Left cardiac atrium (tissue), 4 donors: ENCODE measurements at regions of chr11 and their contacts with region 1.

Region 1: DNA sequence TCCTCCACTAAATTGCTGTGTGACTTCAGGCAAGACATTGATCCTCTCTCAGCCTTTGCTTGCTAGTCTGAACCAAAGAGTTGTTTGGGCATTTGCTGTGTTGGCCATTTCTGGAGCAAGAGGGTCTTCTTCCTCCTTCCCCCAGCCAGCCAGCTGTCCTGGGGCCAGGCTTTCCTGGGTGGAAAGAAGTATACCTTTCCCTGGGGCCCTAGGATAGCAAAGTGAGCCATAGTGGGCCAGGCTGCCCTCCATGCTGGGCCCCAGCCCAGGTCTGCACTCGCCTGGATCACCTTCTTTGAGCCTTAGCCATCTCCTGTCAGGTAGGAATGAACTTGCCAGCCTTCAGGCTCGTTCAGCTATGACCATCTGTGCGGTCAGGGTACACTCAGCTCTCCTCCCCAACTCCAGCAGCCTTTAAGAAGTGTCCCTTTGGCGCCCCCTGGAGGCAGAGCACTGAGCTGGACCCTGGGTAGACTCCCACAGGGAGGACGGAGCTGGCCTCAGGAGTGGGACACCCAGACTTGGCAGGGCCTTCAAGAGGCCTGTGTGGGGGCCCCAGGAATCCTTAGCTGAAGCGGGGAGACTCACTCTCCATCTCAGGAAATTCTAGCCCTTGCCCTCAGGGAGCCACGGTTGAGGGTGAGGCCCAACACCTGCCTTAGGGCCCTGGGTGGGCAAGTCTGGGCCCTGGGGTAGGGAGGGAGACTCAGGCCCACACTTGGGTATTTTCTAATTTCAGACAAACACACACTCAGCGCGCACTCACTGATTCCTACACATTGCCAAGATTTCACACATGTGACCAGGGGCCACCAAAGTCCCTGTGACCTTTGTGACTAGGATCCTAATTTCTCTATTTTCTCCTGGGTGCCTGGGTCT is 35.6 kb upstream of the TPBGL start:
- DNase-seq: peak; percentile 92
- ATAC-seq: peak; percentile 95 to 96

Region 2: DNA sequence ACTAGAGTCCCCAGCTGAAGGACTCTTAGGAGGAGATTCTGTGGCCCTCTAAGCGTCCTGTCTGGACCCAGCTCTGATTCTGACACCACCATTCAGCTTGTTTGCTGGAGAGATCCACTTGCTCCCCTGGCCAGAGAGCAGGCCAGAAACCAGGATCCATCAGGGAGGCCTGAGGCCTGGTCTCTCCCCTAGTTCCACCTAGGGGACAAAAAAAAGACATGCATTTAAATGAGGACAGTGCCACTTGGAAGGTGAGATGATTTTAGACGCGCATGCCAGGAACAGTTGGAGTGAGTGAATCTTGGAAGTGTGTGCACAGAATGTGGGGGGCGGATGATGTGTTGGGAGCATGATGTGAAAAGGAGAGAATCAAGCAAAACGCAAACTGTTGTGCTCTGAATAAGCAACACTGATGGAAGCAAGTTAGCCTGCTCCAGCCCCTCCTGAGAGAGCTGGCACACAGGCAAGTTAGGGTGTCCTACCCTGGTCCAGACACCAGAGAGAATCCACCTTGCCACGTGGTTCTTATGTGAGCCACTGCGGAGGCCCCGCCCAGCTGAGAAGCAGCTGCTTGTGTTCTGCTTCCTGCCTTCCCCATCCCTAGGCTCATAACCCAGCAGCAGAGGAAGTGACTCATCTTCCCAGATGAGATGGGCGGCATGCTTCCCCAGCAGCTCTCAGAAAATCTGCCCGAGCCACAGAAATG is 62.1 kb before region 1 on chr11:
- intact Hi-C with region 1: loop called (anchors 1 to 2 kb)
- DNase-seq: peak; percentile 88
- ATAC-seq: peak; percentile 81 to 90

Region 3: DNA sequence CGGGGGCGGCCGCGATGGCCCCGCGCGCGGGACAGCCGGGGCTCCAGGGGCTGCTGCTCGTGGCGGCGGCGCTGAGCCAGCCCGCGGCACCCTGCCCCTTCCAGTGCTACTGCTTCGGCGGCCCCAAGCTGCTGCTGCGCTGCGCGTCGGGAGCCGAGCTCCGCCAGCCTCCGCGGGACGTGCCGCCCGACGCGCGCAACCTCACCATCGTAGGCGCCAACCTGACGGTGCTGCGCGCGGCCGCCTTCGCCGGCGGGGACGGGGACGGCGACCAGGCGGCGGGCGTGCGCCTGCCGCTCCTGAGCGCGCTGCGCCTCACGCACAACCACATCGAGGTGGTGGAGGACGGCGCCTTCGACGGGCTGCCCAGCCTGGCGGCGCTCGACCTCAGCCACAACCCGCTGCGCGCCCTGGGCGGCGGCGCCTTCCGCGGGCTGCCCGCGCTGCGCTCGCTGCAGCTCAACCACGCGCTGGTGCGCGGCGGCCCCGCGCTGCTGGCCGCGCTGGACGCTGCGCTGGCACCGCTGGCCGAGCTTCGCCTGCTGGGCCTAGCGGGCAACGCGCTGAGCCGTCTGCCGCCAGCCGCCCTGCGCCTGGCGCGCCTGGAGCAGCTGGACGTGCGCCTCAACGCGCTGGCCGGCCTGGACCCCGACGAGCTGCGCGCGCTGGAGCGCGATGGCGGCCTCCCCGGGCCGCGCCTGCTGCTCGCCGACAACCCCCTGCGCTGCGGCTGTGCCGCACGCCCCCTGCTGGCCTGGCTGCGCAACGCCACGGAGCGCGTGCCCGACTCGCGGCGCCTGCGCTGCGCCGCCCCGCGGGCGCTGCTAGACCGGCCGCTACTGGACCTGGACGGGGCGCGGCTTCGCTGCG is 36.3 kb after region 1 on chr11:
- intact Hi-C with region 1: loop called (anchors 5 kb)
- DNase-seq: peak; percentile 85
- ATAC-seq: peak; percentile 93 to 95

Region 4: DNA sequence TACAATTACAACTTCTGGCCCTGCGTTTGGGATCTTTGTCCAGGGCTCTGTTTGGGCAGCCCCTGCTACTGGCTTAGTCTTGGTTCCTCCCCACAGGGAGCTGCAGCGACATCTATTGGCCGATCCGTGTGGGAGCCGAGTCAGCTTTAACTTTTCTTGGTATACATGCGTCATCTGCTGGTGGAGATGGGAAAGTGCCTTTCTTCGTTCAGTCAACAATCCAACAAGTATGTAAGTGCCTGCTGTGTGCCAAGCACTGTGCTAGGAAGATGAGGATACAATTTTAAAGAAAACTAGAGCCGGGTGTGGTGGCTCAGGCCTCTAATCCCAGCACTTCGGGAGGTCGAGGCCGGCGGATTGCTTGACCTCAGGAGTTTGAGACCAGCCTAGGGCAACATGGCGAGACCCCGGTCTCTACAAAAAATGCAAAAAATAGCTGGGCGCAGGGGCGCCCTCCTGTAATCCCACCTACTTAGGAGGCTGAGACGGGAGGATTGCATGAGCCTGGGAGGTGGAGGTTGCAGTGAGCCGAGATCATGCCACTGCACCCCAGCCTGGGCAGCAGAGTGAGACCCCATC is 43.9 kb after region 1 on chr11:
- intact Hi-C with region 1: loop called (anchors 5 kb)
- DNase-seq: peak; percentile 90
- ATAC-seq: peak; percentile 92 to 94